ENCODE measurements at regions of chr10 and their contacts with region 1.

Region 1: GRCh38 chr10:113610631-113611585 is 52.9 kb downstream of the NRAP start:
- DNase-seq: no peak
- ATAC-seq: no peak
- H3K4me3 ChIP-seq: no peak overlapping the region
- H3K27ac ChIP-seq: no peak overlapping the region
- H3K4me1 ChIP-seq: no peaks in the 10 kb centered on the region
- H3K27me3 ChIP-seq: peaks cover 10% of the 10 kb centered on the region
- CTCF ChIP-seq: no peak
- POLR2A ChIP-seq: no peak
- RAD21 ChIP-seq: no peak

Region 2: DNA sequence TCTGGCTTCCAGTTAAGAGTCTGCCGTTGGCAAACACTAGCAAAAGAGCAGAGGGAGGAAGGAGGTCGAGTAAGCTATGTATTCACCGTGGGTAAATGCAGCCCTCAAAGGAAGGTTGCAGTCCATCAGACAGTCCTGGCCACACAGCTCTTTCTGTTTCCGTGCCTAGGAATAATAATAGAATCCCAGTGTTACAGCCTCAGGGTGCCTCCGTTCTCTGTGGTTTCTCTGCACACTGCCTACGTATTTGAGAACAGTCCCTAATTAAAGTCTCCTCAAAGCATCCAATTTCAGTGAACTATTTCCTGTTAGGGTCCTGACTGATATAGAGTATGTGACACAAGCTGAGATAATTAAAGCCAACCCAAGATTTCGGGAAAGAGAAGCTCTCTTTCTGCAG is 1604.1 kb before region 1 on chr10:
- CTCF ChIA-PET with region 1: no interaction called
- POLR2A ChIA-PET with region 1: interaction called, 17 read pairs
- dilution Hi-C with region 1: no loop called
- in situ Hi-C with region 1: no loop called
- intact Hi-C with region 1: no loop called
- DNase-seq: no peak
- ATAC-seq: no peak
- H3K4me3 ChIP-seq: no peak overlapping the region
- H3K27ac ChIP-seq: no peak overlapping the region
- H3K4me1 ChIP-seq: no peaks in the 10 kb centered on the region
- H3K27me3 ChIP-seq: no peaks in the 10 kb centered on the region
- CTCF ChIP-seq: no peak
- POLR2A ChIP-seq: no peak
- RAD21 ChIP-seq: no peak

Region 3: DNA sequence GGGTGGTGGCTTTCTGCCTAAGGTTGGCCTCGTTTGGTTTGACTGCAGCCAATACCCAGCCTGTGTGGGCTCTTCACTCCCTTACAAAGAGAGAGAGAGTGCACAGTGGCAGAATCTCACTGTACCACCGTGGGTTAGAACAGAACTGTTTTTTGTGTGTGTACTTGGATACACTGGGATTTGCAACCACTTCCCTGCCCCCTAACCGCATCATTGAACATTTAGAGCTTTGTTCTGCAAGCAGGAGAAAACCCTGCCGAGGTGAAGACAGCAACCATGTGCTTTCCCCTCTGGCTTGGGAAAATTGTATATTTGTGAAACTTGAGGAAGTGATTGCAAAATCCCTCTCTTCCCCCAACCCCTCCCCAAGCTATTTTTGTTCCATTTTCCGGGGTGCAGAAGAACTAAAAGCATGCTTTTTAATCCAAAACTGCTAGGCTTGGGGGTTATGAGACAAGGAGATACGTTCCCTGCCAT is 459.7 kb before region 1 on chr10:
- CTCF ChIA-PET with region 1: no interaction called
- POLR2A ChIA-PET with region 1: no interaction called
- dilution Hi-C with region 1: no loop called
- in situ Hi-C with region 1: no loop called
- intact Hi-C with region 1: no loop called
- DNase-seq: no peak
- ATAC-seq: no peak
- H3K4me3 ChIP-seq: no peak overlapping the region
- H3K27ac ChIP-seq: no peak overlapping the region
- H3K4me1 ChIP-seq: peaks cover 3% of the 10 kb centered on the region; the same call in 1 of the 2 replicates
- H3K27me3 ChIP-seq: no peaks in the 10 kb centered on the region
- CTCF ChIP-seq: no peak
- POLR2A ChIP-seq: no peak
- RAD21 ChIP-seq: no peak

Region 4: GRCh38 chr10:113907166-113907565 is 296.3 kb after region 1 on chr10:
- CTCF ChIA-PET with region 1: no interaction called
- POLR2A ChIA-PET with region 1: no interaction called
- dilution Hi-C with region 1: no loop called
- in situ Hi-C with region 1: no loop called
- intact Hi-C with region 1: no loop called
- DNase-seq: peak; percentile 29
- ATAC-seq: no peak
- H3K4me3 ChIP-seq: no peak overlapping the region
- H3K27ac ChIP-seq: no peak overlapping the region
- H3K4me1 ChIP-seq: no peaks in the 10 kb centered on the region
- H3K27me3 ChIP-seq: no peaks in the 10 kb centered on the region
- CTCF ChIP-seq: no peak
- POLR2A ChIP-seq: no peak
- RAD21 ChIP-seq: no peak

Measured in IMR-90 (cell line).